Activated B cell treated with CpG ODN at 0.5 μM for 24 hours (primary cell): ENCODE measurements at regions of chr2 and their contacts with region 1.

Region 1: GRCh38 chr2:65605743-65606058 is 173.3 kb upstream of the SPRED2 start:
- DNase-seq: no peak
- ATAC-seq: no peak
- H3K4me3 Mint-ChIP-seq: peak overlapping the region; percentile 75
- H3K27ac Mint-ChIP-seq: peak overlapping the region; percentile 94
- H3K4me1 Mint-ChIP-seq: peaks cover 82% of the 10 kb centered on the region
- H3K27me3 Mint-ChIP-seq: no peaks in the 10 kb centered on the region
- CTCF ChIP-seq: no peak

Region 2: GRCh38 chr2:65536596-65536995 is 69.1 kb before region 1 on chr2:
- CTCF ChIA-PET with region 1: no interaction called
- POLR2A ChIA-PET with region 1: no interaction called
- intact Hi-C with region 1: no loop called
- DNase-seq: no peak
- ATAC-seq: peak; percentile 80
- H3K4me3 Mint-ChIP-seq: no peak overlapping the region
- H3K27ac Mint-ChIP-seq: no peak overlapping the region
- H3K4me1 Mint-ChIP-seq: peaks cover 6% of the 10 kb centered on the region
- H3K27me3 Mint-ChIP-seq: peaks cover 4% of the 10 kb centered on the region
- CTCF ChIP-seq: no peak

Region 3: DNA sequence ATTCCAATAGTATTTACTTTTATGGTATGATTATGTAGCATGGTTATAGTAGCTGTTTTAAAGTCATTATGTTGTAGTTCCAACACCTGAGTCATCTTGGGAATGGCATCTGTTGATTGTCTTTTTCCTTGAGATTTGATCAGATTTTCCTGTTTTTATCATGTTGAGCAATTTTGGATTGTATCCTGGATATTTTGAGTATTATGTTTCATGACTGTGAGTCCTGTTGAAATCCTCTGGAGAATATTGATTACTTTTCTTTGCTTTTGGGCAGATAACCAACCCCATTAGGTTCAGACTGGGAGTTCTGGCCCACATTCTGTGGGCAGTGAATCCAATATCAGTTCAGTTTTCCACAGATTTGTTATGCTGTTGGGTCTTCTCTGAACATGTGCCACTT is 10.1 kb before region 1 on chr2:
- CTCF ChIA-PET with region 1: no interaction called
- POLR2A ChIA-PET with region 1: interaction called, 10 read pairs
- intact Hi-C with region 1: no loop called
- DNase-seq: no peak
- ATAC-seq: no peak
- H3K4me3 Mint-ChIP-seq: no peak overlapping the region
- H3K27ac Mint-ChIP-seq: no peak overlapping the region
- H3K4me1 Mint-ChIP-seq: no peaks in the 10 kb centered on the region
- H3K27me3 Mint-ChIP-seq: no peaks in the 10 kb centered on the region
- CTCF ChIP-seq: no peak